ENCODE measurements at regions of chr20 and their contacts with region 1.

Region 1: GRCh38 chr20:34042262-34042661 is 48.6 kb downstream of the RALY start:
- DNase-seq: no peak
- H3K4me3 ChIP-seq: no peak overlapping the region
- CTCF ChIP-seq: no peak
- POLR2A ChIP-seq: no peak

Region 2: GRCh38 chr20:34001378-34001777 is 40.9 kb before region 1 on chr20:
- intact Hi-C with region 1: loop called (anchors 2 kb)
- DNase-seq: no peak
- H3K4me3 ChIP-seq: no peak overlapping the region
- CTCF ChIP-seq: no peak
- POLR2A ChIP-seq: no peak

Region 3: DNA sequence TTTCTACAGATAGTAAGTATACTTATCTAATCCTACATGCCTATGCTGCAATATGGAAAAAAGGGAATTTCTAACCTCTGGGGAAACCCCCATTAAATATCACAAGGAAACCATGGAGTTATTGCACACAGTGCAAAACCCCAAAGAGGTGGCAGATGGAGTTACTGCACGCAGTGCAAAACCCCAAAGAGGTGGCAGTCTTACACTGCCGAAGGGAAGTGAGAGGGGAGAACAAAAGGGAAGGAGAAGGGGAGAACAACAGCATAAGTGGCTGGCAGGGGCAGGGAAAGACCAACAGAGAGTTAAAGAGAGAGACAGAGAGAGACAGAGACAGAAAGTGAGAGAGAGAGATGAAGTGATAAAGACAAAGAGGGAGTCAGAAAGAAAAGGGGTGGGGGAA is 113.6 kb after region 1 on chr20:
- intact Hi-C with region 1: no loop called
- DNase-seq: peak in 1 of 2 donors; percentile 14
- H3K4me3 ChIP-seq: no peak overlapping the region
- CTCF ChIP-seq: no peak
- POLR2A ChIP-seq: no peak

Region 4: DNA sequence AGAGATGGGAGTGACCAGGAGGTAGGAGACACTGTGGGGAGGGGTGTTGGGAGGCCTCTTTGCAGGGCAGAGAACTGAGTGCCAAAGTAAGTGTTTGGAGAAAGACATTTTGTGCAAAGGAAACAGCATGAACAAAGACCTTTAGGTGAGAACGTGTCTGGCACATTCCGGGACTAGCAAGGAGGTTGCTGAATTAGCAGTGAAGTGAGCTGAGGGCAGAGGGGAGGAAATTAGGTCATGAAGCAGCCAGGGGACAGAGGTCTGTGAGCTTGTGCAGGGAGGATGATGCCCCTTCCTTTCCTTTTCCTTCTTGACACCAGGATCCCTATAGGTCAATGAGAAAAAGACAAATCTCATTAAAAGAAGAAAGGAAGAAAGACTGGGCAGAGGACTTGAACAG is 282.3 kb after region 1 on chr20:
- intact Hi-C with region 1: no loop called
- DNase-seq: no peak
- H3K4me3 ChIP-seq: no peak overlapping the region
- CTCF ChIP-seq: no peak
- POLR2A ChIP-seq: no peak